Activated B cell treated with CpG ODN at 0.5 μM for 24 hours (primary cell): ENCODE measurements at regions of chr22 and their contacts with region 1.

Region 1: GRCh38 chr22:26502688-26503561 is 9.3 kb downstream of the TFIP11 start:
- DNase-seq: no peak
- ATAC-seq: peak; percentile 86
- H3K4me3 Mint-ChIP-seq: peak overlapping the region; percentile 33
- H3K27ac Mint-ChIP-seq: peak overlapping the region; percentile 78
- H3K4me1 Mint-ChIP-seq: peaks cover 17% of the 10 kb centered on the region
- H3K27me3 Mint-ChIP-seq: no peaks in the 10 kb centered on the region
- CTCF ChIP-seq: no peak

Region 2: GRCh38 chr22:26079009-26079738 is 423.8 kb before region 1 on chr22:
- CTCF ChIA-PET with region 1: no interaction called
- POLR2A ChIA-PET with region 1: no interaction called
- intact Hi-C with region 1: no loop called
- DNase-seq: no peak
- ATAC-seq: no peak
- H3K4me3 Mint-ChIP-seq: no peak overlapping the region
- H3K27ac Mint-ChIP-seq: no peak overlapping the region
- H3K4me1 Mint-ChIP-seq: no peaks in the 10 kb centered on the region
- H3K27me3 Mint-ChIP-seq: peaks cover 6% of the 10 kb centered on the region
- CTCF ChIP-seq: no peak

Region 3: DNA sequence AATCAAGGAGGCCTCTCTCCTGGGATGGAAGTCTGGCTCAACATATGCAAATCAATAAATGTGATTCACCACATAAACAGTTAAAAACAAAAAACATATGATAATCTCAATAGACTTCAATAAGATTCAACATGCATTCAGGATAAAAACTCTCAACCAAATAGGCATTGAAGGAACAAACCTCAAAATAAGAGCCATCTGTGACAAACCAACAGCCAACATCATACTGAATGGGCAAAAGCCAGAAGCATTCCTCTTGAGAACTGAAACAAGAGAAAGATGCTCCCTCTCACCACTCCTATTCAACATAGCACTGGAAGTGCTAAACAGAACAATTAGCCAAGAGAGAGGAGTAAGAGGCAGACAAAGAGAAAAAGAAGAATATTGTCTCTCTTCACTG is 387.7 kb before region 1 on chr22:
- CTCF ChIA-PET with region 1: no interaction called
- POLR2A ChIA-PET with region 1: no interaction called
- intact Hi-C with region 1: no loop called
- DNase-seq: no peak
- ATAC-seq: no peak
- H3K4me3 Mint-ChIP-seq: no peak overlapping the region
- H3K27ac Mint-ChIP-seq: no peak overlapping the region
- H3K4me1 Mint-ChIP-seq: no peaks in the 10 kb centered on the region
- H3K27me3 Mint-ChIP-seq: peaks cover 53% of the 10 kb centered on the region
- CTCF ChIP-seq: no peak

Region 4: GRCh38 chr22:27919222-27919941 is 1416.5 kb after region 1 on chr22 and contains the start of gene PITPNB:
- CTCF ChIA-PET with region 1: no interaction called
- POLR2A ChIA-PET with region 1: no interaction called
- intact Hi-C with region 1: loop called (anchors 10 kb)
- DNase-seq: peak; percentile 99
- ATAC-seq: peak; percentile 83
- H3K4me3 Mint-ChIP-seq: peak within 1 kb of the TSS; percentile 99
- H3K27ac Mint-ChIP-seq: peak within 1 kb of the TSS; percentile 99
- H3K4me1 Mint-ChIP-seq: peaks cover 56% of the 10 kb centered on the region
- H3K27me3 Mint-ChIP-seq: no peaks in the 10 kb centered on the region
- CTCF ChIP-seq: no peak
- total RNA-seq, gene PITPNB: 77.1 and 82.5 TPM in 2 replicates